ENCODE measurements at regions of chr4 and their contacts with region 1.

Region 1: GRCh38 chr4:102868781-102869568 is at the start of gene CISD2:
- DNase-seq: peak; percentile 93
- H3K4me3 Mint-ChIP-seq: peak within 1 kb of the TSS; percentile 92
- H3K27ac Mint-ChIP-seq: peak within 1 kb of the TSS; percentile 99
- H3K4me1 Mint-ChIP-seq: peaks cover 71% of the 10 kb centered on the region
- H3K27me3 Mint-ChIP-seq: no peaks in the 10 kb centered on the region
- total RNA-seq, gene CISD2: 37.9 to 39.8 TPM

Region 2: DNA sequence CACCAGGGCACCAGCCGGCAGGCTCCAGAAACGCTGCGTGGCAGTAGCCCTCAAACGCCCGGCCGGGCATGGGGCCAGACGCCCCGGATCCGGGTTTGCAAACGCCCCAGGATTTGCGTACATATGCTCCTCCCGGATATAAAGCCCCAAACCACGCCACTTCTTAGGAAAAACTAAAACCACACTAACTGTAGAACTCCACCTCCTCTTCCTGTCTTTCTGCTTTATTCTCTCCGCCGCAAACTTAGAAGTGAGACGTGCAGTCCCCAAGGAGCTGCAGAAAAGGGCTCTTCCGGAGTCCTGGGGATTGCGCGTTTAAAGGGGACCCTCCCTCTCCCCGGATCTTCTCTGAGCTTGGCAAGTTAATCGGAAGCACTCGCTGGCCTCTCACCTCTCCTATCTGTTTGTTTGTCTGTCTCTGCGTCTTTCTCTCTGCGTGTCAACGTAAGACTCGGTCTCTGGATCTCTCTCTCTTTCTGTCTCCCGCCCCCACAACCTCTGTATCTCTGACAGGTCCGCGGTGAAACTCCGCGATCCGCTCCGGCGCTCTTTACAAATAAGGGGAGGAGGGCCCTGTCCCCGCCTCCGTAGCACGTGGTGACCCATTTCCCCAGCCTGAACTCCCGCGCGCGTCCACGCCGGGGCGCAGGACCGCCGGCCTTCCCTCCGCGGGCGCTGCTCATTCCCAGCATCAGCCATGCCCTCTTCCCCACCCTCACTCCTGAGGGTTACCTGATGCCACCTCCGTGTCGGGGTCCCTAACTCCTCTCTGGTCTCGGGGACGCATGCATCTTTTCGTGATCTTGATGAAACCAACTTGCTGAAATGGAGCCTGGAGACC is 523.8 kb before region 1 on chr4 and contains the start of gene SLC39A8:
- CTCF ChIA-PET with region 1: interaction called, 3 read pairs
- POLR2A ChIA-PET with region 1: interaction called, 17 read pairs
- DNase-seq: peak; percentile 91
- H3K4me3 Mint-ChIP-seq: peak within 1 kb of the TSS; percentile 78
- H3K27ac Mint-ChIP-seq: peak within 1 kb of the TSS; percentile 92
- H3K4me1 Mint-ChIP-seq: peaks cover 44% of the 10 kb centered on the region
- H3K27me3 Mint-ChIP-seq: peaks cover 7% of the 10 kb centered on the region
- total RNA-seq, gene SLC39A8: 101 to 103 TPM

Region 3: GRCh38 chr4:102760645-102761295 is 108.2 kb before region 1 on chr4 and contains the start of gene MANBA:
- CTCF ChIA-PET with region 1: no interaction called
- POLR2A ChIA-PET with region 1: interaction called, 13 read pairs
- DNase-seq: peak; percentile 89
- H3K4me3 Mint-ChIP-seq: peak within 1 kb of the TSS; percentile 99
- H3K27ac Mint-ChIP-seq: peak within 1 kb of the TSS; percentile 81
- H3K4me1 Mint-ChIP-seq: peaks cover 26% of the 10 kb centered on the region
- H3K27me3 Mint-ChIP-seq: peaks cover 8% of the 10 kb centered on the region
- total RNA-seq, gene MANBA: 13.6 to 14.5 TPM

Region 4: DNA sequence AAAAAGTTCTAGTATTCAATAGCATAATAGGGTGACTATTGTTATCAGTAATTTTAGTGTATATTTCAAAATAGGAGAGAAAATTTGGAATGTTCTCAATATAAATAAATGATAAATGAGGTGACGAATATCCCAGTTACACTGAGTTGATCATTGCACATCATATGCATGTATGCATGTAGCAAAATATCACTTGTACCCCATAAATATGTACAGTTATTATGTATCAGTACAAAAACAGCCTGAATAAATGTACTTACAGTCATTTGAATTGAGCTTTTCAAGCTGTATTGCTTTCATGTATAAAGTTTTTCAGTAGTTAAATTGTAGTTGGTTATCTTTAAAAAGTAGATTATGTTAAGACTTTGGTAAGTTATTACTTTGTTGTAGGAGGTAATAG is 12.4 kb after region 1 on chr4:
- CTCF ChIA-PET with region 1: no interaction called
- POLR2A ChIA-PET with region 1: interaction called, 10 read pairs
- DNase-seq: no peak
- H3K4me3 Mint-ChIP-seq: no peak overlapping the region
- H3K27ac Mint-ChIP-seq: no peak overlapping the region
- H3K4me1 Mint-ChIP-seq: peaks cover 11% of the 10 kb centered on the region
- H3K27me3 Mint-ChIP-seq: no peaks in the 10 kb centered on the region

Region 5: DNA sequence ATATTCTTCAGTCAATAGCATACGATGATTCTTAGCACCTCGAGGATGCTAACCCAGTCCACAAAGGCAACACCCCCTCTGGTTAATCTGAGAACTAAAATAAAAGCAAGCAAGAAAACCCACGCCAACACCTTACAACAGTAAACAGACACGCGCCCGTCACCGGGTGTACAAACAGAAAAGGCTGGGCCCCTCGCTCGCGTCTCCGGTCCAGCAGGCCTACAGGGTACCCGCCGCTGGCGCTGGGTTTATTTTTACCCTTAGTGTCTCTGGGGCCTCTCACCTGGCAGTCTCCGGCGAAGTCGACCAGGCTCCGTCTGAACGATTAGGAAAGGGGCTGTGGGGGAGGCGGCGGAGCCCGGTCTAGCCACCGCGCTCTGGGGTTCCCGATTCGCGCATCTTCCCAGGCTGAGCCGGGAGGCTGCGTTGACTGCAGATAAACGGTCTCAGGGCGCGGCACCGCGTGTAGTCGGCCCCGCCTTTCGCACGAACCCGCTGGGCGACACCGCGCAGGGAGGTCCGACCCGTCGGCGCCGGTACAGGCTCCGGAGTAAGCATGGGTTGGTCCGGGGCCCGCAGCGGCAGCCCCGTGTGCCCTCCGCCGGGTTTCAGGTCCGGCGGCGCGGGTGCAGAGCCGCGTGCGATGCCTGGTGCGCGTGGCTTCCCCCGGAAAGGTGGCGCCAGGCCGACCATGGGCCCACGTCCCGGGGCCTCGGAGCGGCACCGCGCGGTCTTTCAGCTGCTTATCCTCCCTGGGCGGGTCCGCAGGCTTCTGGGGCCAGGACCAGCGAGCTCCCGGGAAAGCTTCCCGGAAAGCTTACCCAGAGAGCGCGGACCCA is 207.1 kb after region 1 on chr4:
- CTCF ChIA-PET with region 1: no interaction called
- POLR2A ChIA-PET with region 1: interaction called, 11 read pairs
- DNase-seq: peak; percentile 66
- H3K4me3 Mint-ChIP-seq: peak overlapping the region; percentile 86
- H3K27ac Mint-ChIP-seq: peak overlapping the region; percentile 92
- H3K4me1 Mint-ChIP-seq: peaks cover 47% of the 10 kb centered on the region
- H3K27me3 Mint-ChIP-seq: no peaks in the 10 kb centered on the region

Region 6: GRCh38 chr4:103204111-103204510 is 335.1 kb after region 1 on chr4:
- CTCF ChIA-PET with region 1: no interaction called
- POLR2A ChIA-PET with region 1: no interaction called
- DNase-seq: no peak
- H3K4me3 Mint-ChIP-seq: no peak overlapping the region
- H3K27ac Mint-ChIP-seq: no peak overlapping the region
- H3K4me1 Mint-ChIP-seq: no peaks in the 10 kb centered on the region
- H3K27me3 Mint-ChIP-seq: peaks cover 21% of the 10 kb centered on the region